Gastrocnemius medialis (tissue), 4 donors: ENCODE measurements at regions of chr22 and their contacts with region 1.

Region 1: GRCh38 chr22:19523240-19524169 is 705 bp downstream of the CLDN5 start:
- DNase-seq: no peak
- ATAC-seq: no peak
- H3K4me3 ChIP-seq: peak overlapping the region; percentile 49 to 57 (median 52)
- H3K27ac ChIP-seq: peak overlapping the region; percentile 61 to 82 (median 78)
- H3K4me1 ChIP-seq: peaks cover 0 to 8% of the 10 kb centered on the region in 2 donors
- H3K27me3 ChIP-seq: peaks cover 18 to 26% (median 24%) of the 10 kb centered on the region in 3 donors
- CTCF ChIP-seq: no peak
- POLR2A ChIP-seq: no peak

Region 2: DNA sequence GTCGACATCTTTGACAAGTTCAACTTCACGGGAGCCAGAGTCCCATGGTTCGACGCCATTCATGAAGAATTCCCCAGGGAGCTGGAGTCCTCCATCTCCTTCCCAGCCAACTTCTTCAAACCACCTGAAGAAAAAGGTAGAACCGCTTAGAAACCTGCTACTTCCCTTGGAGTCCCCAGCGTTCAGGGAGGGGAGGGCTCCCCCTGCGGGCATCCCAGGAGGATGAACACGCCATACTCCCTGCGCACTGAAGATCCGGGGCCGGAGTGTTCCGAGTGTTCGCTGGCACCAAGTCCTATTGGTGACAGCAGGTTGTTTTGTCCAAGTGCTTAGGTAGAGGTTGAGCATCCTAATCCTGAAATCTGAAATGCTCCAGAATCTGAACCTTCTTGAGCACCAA is 535.7 kb before region 1 on chr22:
- in situ Hi-C with region 1: loop called in 1 of 4 experiments (anchors 25 kb)
- intact Hi-C with region 1: no loop called
- DNase-seq: no peak
- ATAC-seq: no peak
- H3K4me3 ChIP-seq: no peak overlapping the region
- H3K27ac ChIP-seq: no peak overlapping the region
- H3K4me1 ChIP-seq: no peaks in the 10 kb centered on the region
- H3K27me3 ChIP-seq: no peaks in the 10 kb centered on the region
- CTCF ChIP-seq: no peak
- POLR2A ChIP-seq: no peak

Region 3: GRCh38 chr22:19463496-19464469 is 59.7 kb before region 1 on chr22:
- in situ Hi-C with region 1: no loop called
- intact Hi-C with region 1: no loop called
- DNase-seq: peak in 1 of 2 donors; percentile 66
- ATAC-seq: peak in 1 of 2 donors; percentile 63
- H3K4me3 ChIP-seq: no peak overlapping the region
- H3K27ac ChIP-seq: peak overlapping the region in 3 of 4 donors; percentile 3 to 16 (median 7)
- H3K4me1 ChIP-seq: no peaks in the 10 kb centered on the region
- H3K27me3 ChIP-seq: no peaks in the 10 kb centered on the region
- CTCF ChIP-seq: no peak
- POLR2A ChIP-seq: no peak

Region 4: DNA sequence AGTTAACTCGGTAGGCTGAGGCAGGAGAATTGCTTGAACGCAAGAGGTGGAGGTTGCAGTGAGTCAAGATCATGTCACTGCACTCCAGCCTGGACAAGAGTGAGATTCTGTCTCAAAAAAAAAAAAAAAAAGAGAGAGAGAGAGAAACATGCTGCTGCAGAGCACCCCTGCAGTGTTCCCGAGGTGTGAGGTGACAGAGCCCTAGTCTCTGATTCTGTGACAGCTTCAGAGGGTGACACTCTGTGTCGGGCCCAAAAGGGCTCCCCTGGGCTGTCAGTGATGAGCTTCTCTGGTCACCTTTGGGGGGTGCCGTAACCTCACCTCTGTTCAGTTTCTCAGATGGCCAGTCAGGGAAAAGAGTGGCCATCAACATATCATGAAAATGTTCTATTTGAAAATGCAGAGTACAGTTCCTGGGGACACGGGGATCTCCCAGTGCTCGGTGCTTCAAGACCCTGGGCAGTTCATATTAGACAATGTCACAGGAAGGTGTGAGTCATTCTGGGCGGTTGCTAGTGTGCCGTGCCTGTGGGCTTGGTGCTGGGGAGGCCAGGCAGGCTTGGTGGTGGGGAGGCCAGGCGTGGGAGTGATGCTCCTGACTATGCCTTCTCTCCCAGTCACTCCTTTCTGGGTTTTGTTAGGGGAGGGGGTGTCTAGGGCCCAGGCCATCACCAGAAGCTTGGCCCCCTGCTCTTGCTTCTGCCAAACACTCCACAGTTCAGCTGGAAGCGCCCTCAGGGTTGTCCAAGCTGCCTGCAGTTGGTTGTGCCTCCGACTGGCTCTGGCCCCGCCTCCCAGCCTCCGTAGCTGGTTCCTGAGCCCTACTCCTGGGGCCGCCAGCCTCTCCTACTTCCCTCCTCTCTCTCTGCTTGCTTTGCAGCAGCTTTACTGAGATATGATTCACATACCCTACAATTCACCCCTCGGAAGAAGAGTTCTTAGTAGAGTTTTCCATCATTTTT is 53.2 kb after region 1 on chr22:
- in situ Hi-C with region 1: no loop called
- intact Hi-C with region 1: loop called (anchors 5 kb)
- DNase-seq: no peak
- ATAC-seq: peak; percentile 47 to 49
- H3K4me3 ChIP-seq: no peak overlapping the region
- H3K27ac ChIP-seq: peak overlapping the region; percentile 64 to 78 (median 74)
- H3K4me1 ChIP-seq: peaks cover 0 to 12% of the 10 kb centered on the region in 2 donors
- H3K27me3 ChIP-seq: peaks cover 0 to 2% (median 0%) of the 10 kb centered on the region in 3 donors
- CTCF ChIP-seq: no peak
- POLR2A ChIP-seq: peak; percentile 42 to 63